Heart left ventricle (tissue), 16 donors: ENCODE measurements at regions of chr18 and their contacts with region 1.

Region 1: DNA sequence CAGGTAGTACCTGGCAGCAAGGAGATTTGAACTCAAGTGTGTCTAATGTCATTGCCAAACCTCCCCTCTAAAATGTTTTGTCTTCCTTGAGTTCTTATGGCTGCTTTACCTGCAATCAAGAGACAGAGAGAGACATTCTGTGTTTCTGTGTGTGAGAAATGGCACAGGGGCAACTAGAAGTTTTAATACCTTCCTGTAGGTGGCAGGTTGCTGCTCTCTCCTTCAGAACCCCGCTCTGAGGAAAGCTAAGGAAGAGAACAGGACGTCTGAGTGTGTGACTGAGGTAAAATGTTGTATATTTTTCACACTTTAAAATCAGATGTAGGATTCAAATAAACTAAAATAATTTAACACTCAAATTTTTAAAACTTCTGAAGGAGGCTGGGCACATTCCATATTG is 19.2 kb downstream of the DTNA start:
- DNase-seq: no peak
- ATAC-seq: peak; percentile 41 to 68 (median 60)
- H3K4me3 ChIP-seq: no peak overlapping the region
- H3K27ac ChIP-seq: peak overlapping the region in 11 of 12 donors; percentile 20 to 86 (median 69)
- H3K4me1 ChIP-seq: peaks cover 0 to 33% (median 12%) of the 10 kb centered on the region in 12 donors
- H3K27me3 ChIP-seq: no peaks in the 10 kb centered on the region
- CTCF ChIP-seq: peak in 10 of 12 donors; percentile 17 to 53 (median 45)
- POLR2A ChIP-seq: no peak

Region 2: GRCh38 chr18:34707670-34708069 is 21.6 kb before region 1 on chr18:
- intact Hi-C with region 1: loop called in 1 of 10 experiments (anchors 2 kb)
- DNase-seq: peak in 4 of 5 donors; percentile 38 to 71 (median 52)
- ATAC-seq: peak; percentile 26 to 72 (median 64)
- H3K4me3 ChIP-seq: no peak overlapping the region
- H3K27ac ChIP-seq: peak overlapping the region in 11 of 12 donors; percentile 49 to 82 (median 72)
- H3K4me1 ChIP-seq: peaks cover 8 to 43% (median 29%) of the 10 kb centered on the region in 12 donors
- H3K27me3 ChIP-seq: no peaks in the 10 kb centered on the region
- CTCF ChIP-seq: no peak
- POLR2A ChIP-seq: no peak

Region 3: DNA sequence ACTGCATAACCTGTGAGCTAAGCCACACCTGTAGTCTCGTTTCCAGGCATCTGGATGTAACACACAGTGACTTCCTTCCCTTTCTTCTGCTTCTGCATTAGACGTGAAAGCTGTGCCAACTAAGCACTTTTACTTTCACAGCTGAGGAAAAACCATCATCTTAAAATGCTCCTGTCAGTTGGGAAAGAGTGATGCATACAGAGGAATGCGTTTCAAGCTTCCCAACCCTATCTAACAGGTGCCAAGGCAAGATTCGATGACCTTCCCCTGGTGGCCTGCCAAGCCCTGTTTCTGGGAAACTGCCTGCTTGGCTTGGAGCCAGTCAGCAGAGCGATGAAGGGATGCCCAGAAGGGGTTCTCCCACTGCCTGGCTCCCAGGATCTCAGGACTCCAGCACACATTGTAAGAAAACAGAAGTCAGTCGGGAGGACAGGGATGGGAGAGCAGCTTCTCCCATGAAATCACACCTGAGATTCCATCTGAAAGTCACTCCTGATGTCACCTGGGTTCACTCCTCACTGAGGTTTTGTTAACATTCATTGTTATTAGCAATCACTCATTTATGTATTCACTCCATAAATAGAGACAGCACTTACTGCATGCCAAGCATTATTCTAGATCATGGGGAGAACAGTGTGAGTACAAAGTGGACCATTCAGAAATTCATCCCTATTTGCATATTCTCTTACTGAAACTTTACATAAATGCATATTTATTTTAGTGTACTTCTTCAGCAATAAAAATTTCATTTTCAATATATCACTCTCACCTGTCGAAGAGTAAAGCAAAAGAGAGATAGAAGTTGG is 44.9 kb after region 1 on chr18:
- intact Hi-C with region 1: loop called in 2 of 10 experiments (anchors 5 kb)
- DNase-seq: peak; percentile 44 to 75 (median 62)
- ATAC-seq: peak; percentile 47 to 78 (median 73)
- H3K4me3 ChIP-seq: no peak overlapping the region
- H3K27ac ChIP-seq: peak overlapping the region in 9 of 12 donors; percentile 28 to 70 (median 49)
- H3K4me1 ChIP-seq: peaks cover 0 to 27% (median 19%) of the 10 kb centered on the region in 12 donors
- H3K27me3 ChIP-seq: no peaks in the 10 kb centered on the region
- CTCF ChIP-seq: no peak
- POLR2A ChIP-seq: no peak